ENCODE measurements at regions of chr4 and their contacts with region 1.

Region 1: DNA sequence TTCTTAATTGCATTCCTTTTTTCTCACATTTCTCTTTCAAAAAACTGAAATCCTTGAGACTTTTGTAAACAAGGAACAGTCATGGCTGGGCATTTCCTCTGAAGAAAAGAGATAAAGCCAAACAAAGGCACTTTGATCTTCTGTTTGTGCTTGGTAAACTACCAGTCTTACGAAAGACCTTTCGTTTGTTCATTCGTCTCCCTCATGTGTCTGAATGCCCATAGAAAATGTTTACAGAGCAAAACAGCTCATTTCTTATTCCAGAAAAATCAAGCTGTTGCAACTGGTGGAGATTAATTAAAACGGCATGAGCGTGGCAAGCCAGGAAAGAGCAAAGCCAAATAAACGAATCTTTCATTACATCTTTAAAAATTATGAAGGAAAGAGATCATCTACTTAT is 177.9 kb downstream of the GASK1B start:
- DNase-seq: no peak
- H3K4me3 ChIP-seq: no peak overlapping the region
- CTCF ChIP-seq: no peak

Region 2: DNA sequence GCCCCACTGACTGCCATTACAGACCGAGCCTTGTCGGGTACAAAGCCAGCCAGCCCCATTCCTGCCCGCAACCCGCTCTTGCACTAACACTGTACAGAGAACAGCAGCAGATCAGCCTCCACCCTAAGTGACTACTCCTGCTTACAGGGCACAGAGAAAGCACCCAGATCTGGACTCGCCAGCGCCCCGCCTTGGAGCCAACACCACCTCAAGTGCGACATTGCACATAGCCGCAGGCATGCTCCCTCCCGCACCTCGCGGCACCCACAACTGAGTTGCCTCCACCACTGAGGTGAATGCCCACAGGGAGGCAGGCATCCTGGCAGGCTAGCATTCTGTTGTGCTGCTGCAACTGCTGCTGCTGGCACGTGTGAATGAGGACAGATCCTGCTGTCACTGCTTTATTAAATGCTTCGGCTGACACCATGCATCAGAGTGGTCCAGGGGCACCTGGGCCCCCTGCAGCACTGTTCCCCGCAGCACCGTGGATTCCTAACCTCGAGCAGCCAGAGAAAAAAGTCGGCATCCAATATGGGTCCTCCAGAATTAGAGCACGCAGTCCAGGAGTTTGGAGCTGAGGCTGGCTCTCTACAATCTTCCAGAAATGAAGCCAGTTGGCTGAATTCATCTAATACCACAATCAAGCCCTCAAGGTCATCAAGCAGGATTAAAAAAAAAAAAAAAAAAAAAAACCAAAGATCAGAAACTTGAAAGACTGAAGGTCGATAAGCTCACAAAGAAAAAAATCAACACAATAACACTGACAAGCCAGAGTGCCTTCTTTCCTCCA is 175.0 kb before region 1 on chr4:
- in situ Hi-C with region 1: no loop called
- DNase-seq: no peak
- H3K4me3 ChIP-seq: no peak overlapping the region
- CTCF ChIP-seq: no peak

Region 3: GRCh38 chr4:158172261-158173258 is 177.7 kb after region 1 on chr4 and contains the start of gene GASK1B:
- in situ Hi-C with region 1: loop called (anchors 5 kb)
- DNase-seq: peak; percentile 52
- H3K4me3 ChIP-seq: peak within 1 kb of the TSS; percentile 4
- CTCF ChIP-seq: peak; percentile 72

Measured in astrocyte of the cerebellum (primary cell).